Endothelial cell of umbilical vein (primary cell): ENCODE measurements at regions of chr2 and their contacts with region 1.

Region 1: GRCh38 chr2:61854474-61855182 is 768 bp upstream of the FAM161A start:
- DNase-seq: peak; percentile 95
- H3K4me3 ChIP-seq: peak overlapping the region; percentile 57 to 93 (median 74)
- H3K27ac ChIP-seq: peak overlapping the region; percentile 43
- H3K4me1 ChIP-seq: peaks cover 5% of the 10 kb centered on the region
- H3K27me3 ChIP-seq: no peaks in the 10 kb centered on the region
- CTCF ChIP-seq: no peak
- POLR2A ChIP-seq: no peak

Region 2: GRCh38 chr2:61694312-61695274 is 160.0 kb before region 1 on chr2:
- CTCF ChIA-PET with region 1: no interaction called
- POLR2A ChIA-PET with region 1: no interaction called
- dilution Hi-C with region 1: no loop called
- intact Hi-C with region 1: loop called (anchors 10 kb)
- DNase-seq: peak; percentile 80
- H3K4me3 ChIP-seq: peak overlapping the region; percentile 88 to 90 (median 89)
- H3K27ac ChIP-seq: peak overlapping the region; percentile 10
- H3K4me1 ChIP-seq: peaks cover 4% of the 10 kb centered on the region
- H3K27me3 ChIP-seq: no peaks in the 10 kb centered on the region
- CTCF ChIP-seq: peak; percentile 54 to 74
- POLR2A ChIP-seq: peak; percentile 66

Region 3: GRCh38 chr2:61764035-61764800 is 90.4 kb before region 1 on chr2:
- CTCF ChIA-PET with region 1: no interaction called
- POLR2A ChIA-PET with region 1: no interaction called
- dilution Hi-C with region 1: no loop called
- intact Hi-C with region 1: loop called (anchors 1 kb)
- DNase-seq: peak; percentile 99
- H3K4me3 ChIP-seq: peak overlapping the region; percentile 45 to 84 (median 53)
- H3K27ac ChIP-seq: peak overlapping the region; percentile 99
- H3K4me1 ChIP-seq: peaks cover 9% of the 10 kb centered on the region
- H3K27me3 ChIP-seq: peaks cover 0 to 2% of the 10 kb centered on the region in 2 experiments
- CTCF ChIP-seq: peak in 1 of 2 donors; percentile 1
- POLR2A ChIP-seq: peak; percentile 61

Region 4: GRCh38 chr2:61888267-61889055 is 33.8 kb after region 1 on chr2 and contains the start of gene CCT4:
- CTCF ChIA-PET with region 1: no interaction called
- POLR2A ChIA-PET with region 1: no interaction called
- dilution Hi-C with region 1: no loop called
- intact Hi-C with region 1: loop called (anchors 2 kb)
- DNase-seq: peak; percentile 92
- H3K4me3 ChIP-seq: peak within 1 kb of the TSS; percentile 91 to 98 (median 95)
- H3K27ac ChIP-seq: peak within 1 kb of the TSS; percentile 74
- H3K4me1 ChIP-seq: peaks cover 11% of the 10 kb centered on the region
- H3K27me3 ChIP-seq: no peaks in the 10 kb centered on the region
- CTCF ChIP-seq: no peak
- POLR2A ChIP-seq: peak; percentile 94
- total RNA-seq, gene CCT4: 220 and 222 TPM in 2 replicates

Region 5: DNA sequence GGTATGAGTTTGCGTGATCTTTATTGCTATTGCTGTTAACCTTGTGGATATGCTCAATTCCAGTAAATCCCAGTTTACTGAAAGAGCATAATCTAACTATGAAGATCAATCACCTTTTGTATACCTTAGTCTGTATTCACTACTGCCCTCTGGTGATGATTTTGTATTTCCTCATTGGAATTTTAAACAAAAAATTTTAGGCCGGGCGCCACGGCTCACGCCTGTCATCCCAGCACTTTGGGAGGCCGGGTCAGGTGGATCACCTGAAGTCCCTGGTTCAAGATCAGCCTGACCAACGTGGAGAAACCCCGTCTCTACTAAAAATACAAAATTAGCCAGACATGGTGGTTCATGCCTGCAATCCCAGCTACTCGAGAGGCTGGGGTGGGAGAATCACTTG is 56.0 kb after region 1 on chr2:
- CTCF ChIA-PET with region 1: no interaction called
- POLR2A ChIA-PET with region 1: no interaction called
- dilution Hi-C with region 1: no loop called
- intact Hi-C with region 1: no loop called
- DNase-seq: no peak
- H3K4me3 ChIP-seq: no peak overlapping the region
- H3K27ac ChIP-seq: no peak overlapping the region
- H3K4me1 ChIP-seq: peaks cover 5% of the 10 kb centered on the region
- H3K27me3 ChIP-seq: no peaks in the 10 kb centered on the region
- CTCF ChIP-seq: no peak
- POLR2A ChIP-seq: no peak